Tibial artery (tissue), 4 donors: ENCODE measurements at regions of chr6 and their contacts with region 1.

Region 1: GRCh38 chr6:36917541-36918193 is 31.9 kb downstream of the C6orf89 start:
- DNase-seq: peak; percentile 76 to 78
- H3K4me3 ChIP-seq: no peak overlapping the region
- H3K27ac ChIP-seq: peak overlapping the region; percentile 68 to 81
- H3K4me1 ChIP-seq: peaks cover 3 to 35% (median 21%) of the 10 kb centered on the region in 4 donors
- H3K27me3 ChIP-seq: no peaks in the 10 kb centered on the region
- CTCF ChIP-seq: no peak

Region 2: DNA sequence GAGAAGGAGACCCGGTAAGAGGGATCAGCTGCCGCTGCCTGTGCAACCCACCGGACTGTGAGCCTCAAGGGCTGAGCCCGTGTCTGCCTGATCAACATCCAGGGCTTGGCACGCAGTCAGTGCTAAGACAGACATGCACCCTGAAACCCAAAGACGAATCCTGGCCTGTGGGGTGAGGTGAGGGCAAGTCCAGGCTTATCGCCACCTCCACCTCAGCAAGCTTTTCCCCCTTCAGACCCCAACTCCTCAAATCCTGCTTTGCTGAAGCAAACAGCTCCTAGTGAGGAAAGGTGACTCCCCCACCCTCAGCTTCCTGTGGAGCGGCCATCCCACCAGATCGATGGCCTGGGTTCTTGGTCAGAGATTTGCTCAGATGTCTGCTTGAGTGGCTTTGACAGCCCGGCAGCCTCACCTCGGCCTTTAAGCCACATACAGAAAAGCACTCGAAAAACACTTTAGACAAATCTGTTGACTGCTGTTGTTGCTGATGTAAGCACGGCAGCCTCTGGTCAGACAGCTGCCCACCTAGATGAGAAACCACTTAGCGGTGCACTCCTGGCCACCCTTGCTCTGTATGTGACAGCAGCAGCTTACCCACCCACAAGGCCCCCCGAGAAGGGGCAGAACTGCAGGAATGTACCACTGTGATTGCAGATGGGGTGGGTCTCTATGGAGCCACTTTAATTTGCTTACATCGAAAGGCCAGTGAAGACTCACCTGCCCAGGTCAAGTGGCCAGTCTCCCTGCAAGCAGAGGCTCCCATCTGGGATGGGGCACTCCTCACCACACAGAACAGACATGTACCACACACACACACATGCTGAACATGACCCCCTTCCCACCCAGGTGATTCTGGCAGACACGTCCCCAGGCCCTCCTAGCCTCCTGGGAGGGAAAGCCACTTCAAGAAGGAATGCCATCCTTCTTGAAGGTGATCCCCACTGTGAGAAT is 53.5 kb after region 1 on chr6:
- intact Hi-C with region 1: loop called (anchors 2 kb)
- DNase-seq: no peak
- H3K4me3 ChIP-seq: no peak overlapping the region
- H3K27ac ChIP-seq: no peak overlapping the region
- H3K4me1 ChIP-seq: no peaks in the 10 kb centered on the region
- H3K27me3 ChIP-seq: no peaks in the 10 kb centered on the region
- CTCF ChIP-seq: no peak